ENCODE measurements at regions of chr12 and their contacts with region 1.

Region 1: GRCh38 chr12:57229634-57230380 is at the start of gene SHMT2:
- DNase-seq: peak; percentile 96
- H3K4me3 Mint-ChIP-seq: peak within 1 kb of the TSS; percentile 98
- H3K27ac Mint-ChIP-seq: peak within 1 kb of the TSS; percentile 94
- H3K4me1 Mint-ChIP-seq: peaks cover 56% of the 10 kb centered on the region
- H3K27me3 Mint-ChIP-seq: peaks cover 20% of the 10 kb centered on the region
- total RNA-seq, gene SHMT2: 401 to 404 TPM

Region 2: DNA sequence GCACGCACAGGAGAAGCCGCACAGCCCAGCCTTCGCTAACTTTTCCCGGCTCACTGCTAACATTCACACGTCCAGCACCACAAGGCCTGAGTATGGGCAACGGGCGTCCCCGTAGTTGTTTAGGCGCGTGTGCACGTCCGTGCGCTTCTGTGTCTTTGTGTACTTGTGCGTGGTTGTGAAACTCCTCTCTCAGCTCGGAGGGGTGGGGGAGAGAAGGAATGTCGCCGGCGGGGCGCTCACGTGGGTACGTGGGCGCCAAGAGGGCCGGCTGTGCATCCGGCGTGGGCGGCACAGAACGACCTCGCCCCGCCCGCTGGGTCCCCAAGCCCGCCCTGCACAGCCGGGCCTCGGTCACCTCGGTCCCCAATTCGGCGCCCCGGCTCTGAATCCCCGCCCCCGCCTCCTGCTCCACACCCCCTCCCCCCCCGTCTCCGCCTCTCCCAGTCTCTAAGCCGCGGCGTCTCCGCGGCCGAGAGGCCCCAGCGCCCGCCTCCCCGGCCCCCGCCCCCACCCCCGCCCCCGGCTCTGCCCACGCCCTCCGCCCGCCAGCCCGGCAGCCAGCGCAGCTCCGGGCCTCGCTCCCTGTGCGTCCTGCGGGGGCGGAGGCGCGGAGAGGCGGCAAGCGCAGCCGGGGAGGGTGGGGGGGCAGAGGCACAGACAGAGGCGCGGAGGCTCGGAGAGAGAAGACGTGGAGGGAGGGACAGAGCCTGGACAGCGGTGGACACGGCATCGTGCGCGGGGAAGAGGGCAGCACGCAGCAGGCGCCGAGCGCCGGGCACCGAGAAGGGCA is 141.2 kb before region 1 on chr12 and contains the start of gene NAB2:
- CTCF ChIA-PET with region 1: no interaction called
- POLR2A ChIA-PET with region 1: no interaction called
- intact Hi-C with region 1: loop called (anchors 5 kb)
- DNase-seq: peak; percentile 92
- H3K4me3 Mint-ChIP-seq: peak within 1 kb of the TSS; percentile 91
- H3K27ac Mint-ChIP-seq: peak within 1 kb of the TSS; percentile 95
- H3K4me1 Mint-ChIP-seq: peaks cover 61% of the 10 kb centered on the region
- H3K27me3 Mint-ChIP-seq: no peaks in the 10 kb centered on the region
- total RNA-seq, gene NAB2: 39.6 to 41.6 TPM

Region 3: GRCh38 chr12:57213058-57213715 is 16.6 kb before region 1 on chr12:
- CTCF ChIA-PET with region 1: interaction called, 175 read pairs
- POLR2A ChIA-PET with region 1: interaction called, 6 read pairs
- intact Hi-C with region 1: loop called (anchors 1 kb)
- DNase-seq: peak; percentile 90
- H3K4me3 Mint-ChIP-seq: no peak overlapping the region
- H3K27ac Mint-ChIP-seq: no peak overlapping the region
- H3K4me1 Mint-ChIP-seq: peaks cover 31% of the 10 kb centered on the region
- H3K27me3 Mint-ChIP-seq: peaks cover 40% of the 10 kb centered on the region